RWPE1 (cell line): ENCODE measurements at regions of chr20 and their contacts with region 1.

Region 1: GRCh38 chr20:51712501-51713197 is 55.5 kb downstream of the ATP9A start:
- DNase-seq: peak; percentile 42
- H3K27ac ChIP-seq: no peak overlapping the region
- CTCF ChIP-seq: no peak

Region 2: GRCh38 chr20:51668935-51669334 is 43.7 kb before region 1 on chr20:
- CTCF ChIA-PET with region 1: no interaction called
- POLR2A ChIA-PET with region 1: no interaction called
- DNase-seq: no peak
- H3K27ac ChIP-seq: no peak overlapping the region
- CTCF ChIP-seq: no peak

Region 3: GRCh38 chr20:51725380-51726203 is 12.9 kb after region 1 on chr20:
- CTCF ChIA-PET with region 1: no interaction called
- POLR2A ChIA-PET with region 1: no interaction called
- DNase-seq: peak; percentile 36
- H3K27ac ChIP-seq: no peak overlapping the region
- CTCF ChIP-seq: no peak

Region 4: DNA sequence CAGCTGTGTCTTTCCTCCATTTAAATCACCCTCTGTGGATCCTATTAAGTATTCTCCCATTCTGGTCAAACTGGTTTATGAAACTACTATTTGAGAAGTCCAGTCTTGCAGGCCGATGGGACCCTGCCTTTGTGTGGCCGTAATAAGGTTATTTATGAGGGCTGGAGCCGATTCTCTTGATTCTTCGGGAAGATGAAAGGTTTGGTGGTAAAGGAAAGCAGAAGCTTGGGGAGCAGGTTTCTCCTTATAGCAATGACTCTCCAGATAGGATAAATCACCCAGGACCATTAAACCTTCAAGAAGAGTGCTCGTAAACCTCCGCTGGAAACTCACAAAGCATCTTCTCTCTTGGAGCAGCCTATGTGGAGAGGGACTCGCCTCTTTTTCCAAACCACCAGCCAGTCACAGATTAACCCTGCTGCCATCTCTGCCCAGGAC is 159.2 kb after region 1 on chr20:
- CTCF ChIA-PET with region 1: interaction called, 10 read pairs
- POLR2A ChIA-PET with region 1: no interaction called
- DNase-seq: no peak
- H3K27ac ChIP-seq: no peak overlapping the region
- CTCF ChIP-seq: no peak